Mammary epithelial cell (primary cell): ENCODE measurements at regions of chr11 and their contacts with region 1.

Region 1: DNA sequence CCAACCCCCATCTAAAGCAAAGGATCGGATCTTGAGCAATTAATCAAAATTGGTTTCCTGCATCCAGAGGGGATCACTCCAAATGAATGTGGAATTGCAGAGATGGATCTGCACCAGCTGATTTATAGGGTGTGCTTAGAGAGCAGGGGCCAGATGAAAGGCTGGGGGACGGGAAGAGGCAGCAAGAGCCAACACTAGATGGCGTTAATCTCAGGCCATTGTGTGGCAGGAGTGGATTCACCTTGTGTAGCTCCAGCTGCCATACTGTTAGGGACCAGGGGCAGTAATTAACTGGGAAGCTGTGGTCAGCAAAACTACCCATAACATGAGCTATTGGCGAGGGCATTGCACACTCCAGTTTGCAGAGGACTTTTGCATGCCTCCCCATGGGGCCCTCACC is 35.6 kb downstream of the SERPINH1 start:
- DNase-seq: peak; percentile 24
- H3K4me3 ChIP-seq: no peak overlapping the region
- H3K27ac ChIP-seq: no peak overlapping the region
- H3K4me1 ChIP-seq: peaks cover under 1% of the 10 kb centered on the region
- H3K27me3 ChIP-seq: no peaks in the 10 kb centered on the region
- CTCF ChIP-seq: peak; percentile 70 to 73

Region 2: GRCh38 chr11:75654314-75654713 is 56.7 kb after region 1 on chr11:
- CTCF ChIA-PET with region 1: no interaction called
- dilution Hi-C with region 1: no loop called
- in situ Hi-C with region 1: no loop called
- intact Hi-C with region 1: no loop called
- DNase-seq: peak; percentile 93
- H3K4me3 ChIP-seq: no peak overlapping the region
- H3K27ac ChIP-seq: peak overlapping the region; percentile 46
- H3K4me1 ChIP-seq: peaks cover 41% of the 10 kb centered on the region
- H3K27me3 ChIP-seq: no peaks in the 10 kb centered on the region
- CTCF ChIP-seq: no peak

Region 3: DNA sequence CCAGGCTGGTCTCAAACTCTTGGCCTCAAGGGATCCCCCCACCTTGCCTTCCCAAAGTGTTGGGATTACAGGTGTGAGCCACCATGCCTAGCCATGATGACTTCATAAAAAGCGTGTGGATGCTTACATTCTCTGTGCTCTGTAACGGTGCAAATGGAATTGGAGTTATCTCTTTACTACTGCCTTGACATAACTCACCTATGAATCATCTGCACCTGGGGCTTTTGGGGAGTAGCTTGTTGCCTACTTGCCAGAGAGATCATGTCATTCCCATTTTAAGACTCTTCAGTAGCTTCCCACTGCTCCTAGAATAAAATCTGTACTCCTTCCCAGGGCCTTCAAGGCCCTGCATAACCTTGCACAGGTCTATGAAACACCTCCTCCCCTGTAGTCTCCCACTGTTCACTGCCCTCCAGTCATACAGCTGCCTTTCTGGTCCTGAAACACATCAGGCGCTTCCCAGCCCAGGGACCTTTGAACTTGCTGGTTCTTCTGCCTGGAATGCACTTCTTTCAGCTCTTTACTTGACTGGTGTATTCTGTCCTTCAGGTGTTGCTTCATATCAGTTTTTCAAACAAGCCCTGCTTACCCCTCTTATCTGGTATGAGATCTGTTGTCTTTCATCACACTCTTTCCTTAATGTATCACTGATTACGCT is 100.4 kb after region 1 on chr11:
- CTCF ChIA-PET with region 1: interaction called, 6 read pairs
- dilution Hi-C with region 1: loop called (anchors 5 kb)
- in situ Hi-C with region 1: no loop called
- intact Hi-C with region 1: no loop called
- DNase-seq: peak; percentile 74
- H3K4me3 ChIP-seq: no peak overlapping the region
- H3K27ac ChIP-seq: no peak overlapping the region
- H3K4me1 ChIP-seq: peaks cover 9% of the 10 kb centered on the region
- H3K27me3 ChIP-seq: no peaks in the 10 kb centered on the region
- CTCF ChIP-seq: no peak

Region 4: DNA sequence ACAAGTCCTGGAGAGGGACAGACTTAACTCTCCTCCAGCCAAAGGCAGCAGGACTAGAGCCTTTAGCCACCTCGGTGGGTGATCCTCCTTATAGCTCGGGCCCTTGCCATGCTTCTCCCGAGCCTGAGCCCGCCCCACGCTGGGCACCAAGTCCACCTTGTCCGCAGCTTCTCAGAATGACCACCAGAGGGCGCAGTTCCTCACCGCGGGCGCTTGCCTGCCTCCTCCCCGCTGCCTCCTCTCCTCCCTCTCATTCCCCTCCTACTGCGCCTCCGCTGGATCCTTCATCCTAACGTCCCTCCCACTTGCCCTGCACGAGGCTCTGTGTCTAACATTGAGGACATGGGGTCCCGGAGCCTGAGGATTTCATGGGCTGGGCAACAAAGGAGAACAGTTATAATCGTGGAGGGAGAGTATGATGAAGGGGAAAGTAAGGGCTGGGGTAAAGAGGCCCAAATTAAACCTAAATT is 108.7 kb after region 1 on chr11:
- CTCF ChIA-PET with region 1: interaction called, 10 read pairs
- dilution Hi-C with region 1: no loop called
- in situ Hi-C with region 1: no loop called
- intact Hi-C with region 1: loop called (anchors 2 kb)
- DNase-seq: peak; percentile 55
- H3K4me3 ChIP-seq: no peak overlapping the region
- H3K27ac ChIP-seq: no peak overlapping the region
- H3K4me1 ChIP-seq: no peaks in the 10 kb centered on the region
- H3K27me3 ChIP-seq: no peaks in the 10 kb centered on the region
- CTCF ChIP-seq: peak; percentile 81 to 92